ENCODE measurements at regions of chr12 and their contacts with region 1.

Region 1: DNA sequence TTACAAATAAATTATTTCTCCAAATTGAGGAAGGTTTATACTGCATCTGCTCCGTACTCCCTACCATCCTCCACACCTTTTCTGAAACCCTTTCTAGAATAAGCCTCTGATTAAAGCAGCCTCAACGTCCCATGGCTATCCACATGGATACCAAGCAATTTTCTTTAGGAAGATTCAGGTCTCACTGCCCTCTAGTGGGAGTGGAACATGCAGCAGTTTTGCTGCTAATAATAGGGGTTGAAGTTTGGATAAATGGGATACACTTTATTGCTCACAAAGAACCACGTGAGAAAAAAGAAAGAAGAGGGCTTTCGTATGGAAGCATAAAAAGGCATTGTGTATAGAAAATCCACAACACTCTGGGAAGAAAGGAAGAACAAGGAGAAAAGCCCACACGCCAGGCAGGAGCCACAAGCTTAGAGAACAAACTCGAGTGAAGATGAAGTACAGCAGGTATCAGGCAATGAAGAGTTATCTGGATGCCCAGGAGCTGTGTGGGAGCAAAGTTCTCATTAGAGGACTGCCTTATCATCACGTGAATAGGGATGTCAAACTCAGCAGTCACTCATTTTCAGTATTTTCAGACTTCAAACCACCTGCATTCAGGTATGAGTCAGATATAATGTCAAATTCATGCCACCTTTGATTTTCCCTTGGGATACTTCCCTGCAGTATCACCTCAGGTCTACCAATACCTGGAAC is 45.8 kb downstream of the CCER1 start:
- DNase-seq: peak; percentile 49 to 56
- H3K4me3 ChIP-seq: no peak overlapping the region
- H3K4me1 ChIP-seq: no peaks in the 10 kb centered on the region
- H3K27me3 ChIP-seq: no peaks in the 10 kb centered on the region

Region 2: DNA sequence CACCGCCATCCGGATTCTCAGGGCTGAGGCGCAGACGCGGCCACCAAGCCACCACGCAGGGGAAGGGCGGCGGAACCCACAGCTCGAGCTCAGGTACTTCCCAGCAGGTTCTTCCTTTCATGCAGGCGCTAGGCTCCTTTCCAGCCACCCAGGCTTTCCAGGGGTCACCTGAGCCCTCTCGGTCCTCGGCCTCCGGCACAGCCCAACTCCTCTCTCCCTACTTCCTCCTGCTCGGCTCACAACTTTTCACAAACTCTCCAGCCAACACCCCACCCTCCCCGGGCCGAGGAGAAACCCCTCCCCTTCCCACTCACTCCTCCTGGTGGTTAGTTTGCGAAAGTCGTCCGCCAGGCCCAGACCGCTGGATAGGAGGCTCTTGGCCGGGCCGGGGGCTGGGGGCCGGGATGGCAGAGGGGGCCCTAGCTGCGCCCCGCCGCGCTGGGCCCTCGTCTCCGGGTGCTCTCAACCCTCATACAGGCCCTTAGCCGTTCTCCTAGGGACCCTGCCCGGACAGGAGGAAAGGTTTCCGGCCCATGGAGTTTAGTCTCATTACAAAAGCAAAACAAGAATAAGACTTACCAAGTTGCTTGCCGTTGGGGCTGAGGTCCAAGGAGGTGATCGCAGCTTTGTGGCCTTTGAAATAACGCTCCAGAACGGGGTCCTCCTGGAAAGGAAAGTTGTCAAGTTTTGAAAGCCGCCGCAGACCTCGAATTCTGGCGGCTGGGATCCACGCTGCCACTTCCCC is 1384.5 kb before region 1 on chr12 and contains the start of gene GALNT4:
- in situ Hi-C with region 1: loop called (anchors 25 kb)
- DNase-seq: peak; percentile 74 to 92
- H3K4me3 ChIP-seq: peak within 1 kb of the TSS; percentile 83
- H3K4me1 ChIP-seq: peaks cover 7% of the 10 kb centered on the region
- H3K27me3 ChIP-seq: no peaks in the 10 kb centered on the region

Region 3: GRCh38 chr12:90627180-90627896 is 281.9 kb before region 1 on chr12:
- in situ Hi-C with region 1: no loop called
- DNase-seq: no peak
- H3K4me3 ChIP-seq: no peak overlapping the region
- H3K4me1 ChIP-seq: no peaks in the 10 kb centered on the region
- H3K27me3 ChIP-seq: no peaks in the 10 kb centered on the region

Region 4: DNA sequence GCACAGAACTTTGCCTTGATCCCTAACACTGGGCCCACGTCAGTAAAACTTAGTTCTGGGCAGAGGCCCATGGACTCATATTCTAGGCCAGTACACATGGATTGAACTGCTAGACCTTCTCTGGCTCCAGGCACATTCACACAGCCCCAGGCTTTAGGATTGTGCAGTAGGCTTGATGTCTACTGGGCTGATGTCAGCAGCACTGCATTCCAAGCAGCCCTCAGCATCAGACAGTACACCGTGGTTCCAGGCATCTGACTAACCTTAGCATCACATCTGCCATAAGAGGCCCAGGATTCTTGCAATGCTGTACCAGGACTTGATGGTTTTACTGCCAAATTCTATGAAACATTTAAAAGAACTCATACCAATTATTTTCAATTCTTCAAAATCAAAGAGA is 256.2 kb before region 1 on chr12:
- in situ Hi-C with region 1: no loop called
- DNase-seq: no peak
- H3K4me3 ChIP-seq: no peak overlapping the region
- H3K4me1 ChIP-seq: no peaks in the 10 kb centered on the region
- H3K27me3 ChIP-seq: peaks cover 2% of the 10 kb centered on the region; the same call in 1 of the 2 replicates